CD4-positive, alpha-beta memory T cell (primary cell): ENCODE measurements at regions of chr3 and their contacts with region 1.

Region 1: GRCh38 chr3:56915966-56916586 is 114.3 kb upstream of the ARHGEF3 start:
- DNase-seq: peak; percentile 71 to 89 (median 78)
- H3K4me3 ChIP-seq: peak overlapping the region; percentile 90 to 92
- H3K4me3 Mint-ChIP-seq: peak overlapping the region; percentile 91 to 96 (median 94)
- H3K27ac ChIP-seq: peak overlapping the region; percentile 78
- H3K27ac Mint-ChIP-seq: peak overlapping the region; percentile 92 to 98 (median 94)
- H3K4me1 ChIP-seq: peaks cover 77% of the 10 kb centered on the region
- H3K4me1 Mint-ChIP-seq: peaks cover 64 to 92% (median 72%) of the 10 kb centered on the region in 4 donors
- H3K27me3 ChIP-seq: no peaks in the 10 kb centered on the region
- H3K27me3 Mint-ChIP-seq: no peaks in the 10 kb centered on the region

Region 2: DNA sequence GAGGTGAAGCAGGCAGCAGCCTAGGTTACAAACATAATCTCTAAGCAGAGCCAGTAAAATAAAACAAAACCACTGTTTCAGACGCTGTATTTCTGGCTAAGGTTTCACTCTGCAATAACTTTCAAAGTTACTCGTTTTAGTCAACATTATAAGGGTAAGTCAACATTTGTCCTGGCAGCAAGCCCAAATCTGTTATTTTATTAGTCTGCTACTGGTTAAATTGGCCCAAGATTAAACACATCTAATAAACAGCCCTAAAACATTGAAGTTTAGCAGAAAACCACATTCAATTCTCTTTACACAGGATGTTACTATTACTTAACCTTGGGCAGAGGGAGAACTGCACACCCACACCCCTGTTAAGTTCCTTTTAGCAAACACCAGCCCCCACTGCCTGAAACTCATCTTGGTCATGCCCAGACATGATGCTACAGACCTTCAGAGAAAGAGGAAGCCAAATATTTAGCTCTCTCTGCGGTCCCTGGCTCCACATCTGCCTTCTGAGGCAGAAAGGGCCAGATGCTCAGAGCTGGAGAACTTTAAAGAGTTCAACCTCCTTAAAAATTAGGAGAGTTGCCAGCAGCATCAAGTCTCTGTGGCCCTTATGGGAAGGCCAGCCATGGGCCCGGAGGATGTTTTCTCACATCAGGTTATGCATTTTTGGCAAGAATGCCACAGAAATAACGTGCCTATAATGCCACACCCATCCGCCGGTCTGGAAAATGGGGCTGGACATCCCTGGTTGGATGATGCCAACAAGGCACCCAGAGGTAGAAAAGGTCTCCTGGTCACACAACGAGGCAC is 132.2 kb before region 1 on chr3:
- CTCF ChIA-PET with region 1: interaction called, 3 read pairs
- POLR2A ChIA-PET with region 1: interaction called, 43 read pairs
- intact Hi-C with region 1: no loop called
- DNase-seq: peak; percentile 80 to 90 (median 84)
- H3K4me3 ChIP-seq: peak overlapping the region; percentile 26 to 45
- H3K4me3 Mint-ChIP-seq: peak overlapping the region; percentile 73 to 87 (median 84)
- H3K27ac ChIP-seq: peak overlapping the region; percentile 69
- H3K27ac Mint-ChIP-seq: peak overlapping the region; percentile 85 to 97 (median 94)
- H3K4me1 ChIP-seq: peaks cover 100% of the 10 kb centered on the region
- H3K4me1 Mint-ChIP-seq: peaks cover 85 to 100% (median 94%) of the 10 kb centered on the region in 4 donors
- H3K27me3 ChIP-seq: no peaks in the 10 kb centered on the region
- H3K27me3 Mint-ChIP-seq: no peaks in the 10 kb centered on the region

Region 3: GRCh38 chr3:56864090-56864489 is 52.0 kb before region 1 on chr3:
- CTCF ChIA-PET with region 1: no interaction called
- POLR2A ChIA-PET with region 1: interaction called, 19 read pairs
- intact Hi-C with region 1: no loop called
- DNase-seq: no peak
- H3K4me3 ChIP-seq: no peak overlapping the region
- H3K4me3 Mint-ChIP-seq: peak overlapping the region in 1 of 8 donors; percentile 7
- H3K27ac ChIP-seq: no peak overlapping the region
- H3K27ac Mint-ChIP-seq: peak overlapping the region in 6 of 7 donors; percentile 0 to 74 (median 58)
- H3K4me1 ChIP-seq: peaks cover 50% of the 10 kb centered on the region
- H3K4me1 Mint-ChIP-seq: peaks cover 54 to 87% (median 70%) of the 10 kb centered on the region in 4 donors
- H3K27me3 ChIP-seq: no peaks in the 10 kb centered on the region
- H3K27me3 Mint-ChIP-seq: no peaks in the 10 kb centered on the region

Region 4: DNA sequence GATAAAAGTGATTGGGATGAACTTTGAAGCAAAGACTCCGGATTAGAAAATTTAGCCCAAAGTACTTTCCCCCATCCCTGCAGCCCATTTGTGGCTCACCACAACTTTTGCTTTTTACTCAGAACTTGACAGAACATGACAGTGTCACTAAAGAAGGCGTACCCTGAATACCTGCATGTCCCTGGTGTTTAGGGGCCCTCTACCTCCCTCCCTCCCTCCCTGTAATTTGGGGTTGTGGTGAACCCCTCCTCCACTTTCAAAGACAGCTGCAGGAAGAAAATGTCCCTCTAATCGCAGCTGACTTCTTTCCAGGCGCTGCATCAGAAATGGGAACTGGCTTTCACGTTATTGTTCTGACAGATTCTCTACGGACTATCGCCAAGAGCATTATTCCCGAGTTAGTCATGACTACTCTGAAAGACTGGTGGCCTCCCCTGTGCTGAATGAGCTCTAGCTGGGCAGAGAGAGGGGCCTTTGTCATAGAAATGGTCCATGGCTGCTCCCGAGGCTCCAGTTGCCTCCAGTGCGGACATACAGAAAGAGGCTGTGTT is 21.1 kb before region 1 on chr3:
- CTCF ChIA-PET with region 1: interaction called, 4 read pairs
- POLR2A ChIA-PET with region 1: interaction called, 82 read pairs
- intact Hi-C with region 1: loop called (anchors 2 kb)
- DNase-seq: peak; percentile 13 to 55 (median 24)
- H3K4me3 ChIP-seq: no peak overlapping the region
- H3K4me3 Mint-ChIP-seq: peak overlapping the region in 6 of 8 donors; percentile 39 to 63 (median 48)
- H3K27ac ChIP-seq: no peak overlapping the region
- H3K27ac Mint-ChIP-seq: peak overlapping the region; percentile 29 to 89 (median 66)
- H3K4me1 ChIP-seq: peaks cover 58% of the 10 kb centered on the region
- H3K4me1 Mint-ChIP-seq: peaks cover 55 to 82% (median 72%) of the 10 kb centered on the region in 4 donors
- H3K27me3 ChIP-seq: no peaks in the 10 kb centered on the region
- H3K27me3 Mint-ChIP-seq: no peaks in the 10 kb centered on the region

Region 5: DNA sequence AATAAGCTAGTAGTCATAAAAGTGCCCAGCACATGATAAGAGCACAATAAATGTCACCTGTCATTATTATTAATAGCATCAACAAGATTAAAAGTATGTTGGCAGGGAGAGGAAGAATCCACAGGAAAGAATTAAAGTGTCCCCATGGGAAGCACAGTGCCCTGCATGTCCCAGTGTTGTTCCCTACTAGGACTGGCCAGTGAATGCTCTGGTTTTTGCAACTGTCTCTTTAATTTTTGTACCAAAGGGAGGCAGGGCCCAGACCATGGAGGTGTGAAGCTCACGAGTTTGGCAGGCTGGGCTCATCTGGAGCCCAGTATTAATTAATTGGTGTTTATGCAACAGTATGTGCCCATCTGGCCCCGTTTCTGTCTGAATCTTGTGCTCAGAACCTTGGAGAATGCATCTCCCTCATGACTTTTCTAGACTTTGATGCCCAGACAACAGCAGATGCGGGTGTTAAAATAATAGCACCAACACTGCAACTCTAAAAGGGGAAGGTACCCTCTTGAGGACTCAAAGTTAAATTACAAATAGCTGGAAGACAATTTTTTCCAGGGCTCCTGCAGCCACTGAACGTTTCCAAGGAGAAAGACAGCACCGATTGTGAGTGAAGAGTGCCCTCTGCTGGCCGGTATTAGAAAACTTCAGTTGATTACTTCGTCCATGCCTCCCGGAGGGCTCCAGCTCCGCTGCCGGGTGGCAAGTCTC is 72.5 kb after region 1 on chr3:
- CTCF ChIA-PET with region 1: interaction called, 50 read pairs
- POLR2A ChIA-PET with region 1: interaction called, 12 read pairs
- intact Hi-C with region 1: loop called (anchors 2 kb)
- DNase-seq: peak; percentile 53 to 67 (median 61)
- H3K4me3 ChIP-seq: no peak overlapping the region
- H3K4me3 Mint-ChIP-seq: peak overlapping the region in 1 of 8 donors; percentile 18
- H3K27ac ChIP-seq: no peak overlapping the region
- H3K27ac Mint-ChIP-seq: peak overlapping the region in 3 of 7 donors; percentile 14 to 32 (median 15)
- H3K4me1 ChIP-seq: peaks cover 9% of the 10 kb centered on the region
- H3K4me1 Mint-ChIP-seq: peaks cover 9 to 28% (median 17%) of the 10 kb centered on the region in 4 donors
- H3K27me3 ChIP-seq: no peaks in the 10 kb centered on the region
- H3K27me3 Mint-ChIP-seq: peaks cover 7 to 9% of the 10 kb centered on the region in 2 donors